Left cardiac atrium (tissue), 4 donors: ENCODE measurements at regions of chr6 and their contacts with region 1.

Region 1: DNA sequence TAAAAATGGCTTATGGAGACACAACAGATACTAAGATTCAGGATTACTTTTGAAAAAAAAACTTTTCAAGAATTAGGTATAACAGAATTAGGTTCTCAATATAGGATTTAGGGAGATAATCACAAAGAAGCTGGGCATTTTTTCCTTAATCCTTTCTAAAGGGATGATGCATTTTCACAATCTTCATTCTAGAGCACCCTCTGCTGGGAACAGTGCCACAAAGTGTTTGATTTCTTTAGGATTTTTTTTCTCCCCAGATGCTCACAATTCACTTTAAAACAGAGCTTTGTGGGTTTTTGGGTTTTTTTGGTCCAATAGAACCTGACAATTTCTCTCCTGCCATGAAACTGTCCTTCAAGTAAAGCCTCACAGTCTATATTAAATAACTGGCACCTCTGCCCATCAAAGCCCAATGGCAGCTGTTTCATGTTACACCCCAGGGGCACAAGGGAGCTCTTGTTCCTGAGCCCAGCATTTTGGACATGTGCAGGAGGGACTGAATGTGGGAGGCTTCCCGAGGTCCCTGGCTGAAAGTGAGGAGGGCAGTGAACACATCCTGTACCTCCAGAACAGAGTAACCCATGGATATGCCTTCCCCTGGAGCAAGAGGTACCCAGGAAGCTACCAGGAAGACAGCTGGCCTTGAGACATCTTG is 39.7 kb downstream of the PREP start:
- DNase-seq: no peak
- ATAC-seq: no peak

Region 2: DNA sequence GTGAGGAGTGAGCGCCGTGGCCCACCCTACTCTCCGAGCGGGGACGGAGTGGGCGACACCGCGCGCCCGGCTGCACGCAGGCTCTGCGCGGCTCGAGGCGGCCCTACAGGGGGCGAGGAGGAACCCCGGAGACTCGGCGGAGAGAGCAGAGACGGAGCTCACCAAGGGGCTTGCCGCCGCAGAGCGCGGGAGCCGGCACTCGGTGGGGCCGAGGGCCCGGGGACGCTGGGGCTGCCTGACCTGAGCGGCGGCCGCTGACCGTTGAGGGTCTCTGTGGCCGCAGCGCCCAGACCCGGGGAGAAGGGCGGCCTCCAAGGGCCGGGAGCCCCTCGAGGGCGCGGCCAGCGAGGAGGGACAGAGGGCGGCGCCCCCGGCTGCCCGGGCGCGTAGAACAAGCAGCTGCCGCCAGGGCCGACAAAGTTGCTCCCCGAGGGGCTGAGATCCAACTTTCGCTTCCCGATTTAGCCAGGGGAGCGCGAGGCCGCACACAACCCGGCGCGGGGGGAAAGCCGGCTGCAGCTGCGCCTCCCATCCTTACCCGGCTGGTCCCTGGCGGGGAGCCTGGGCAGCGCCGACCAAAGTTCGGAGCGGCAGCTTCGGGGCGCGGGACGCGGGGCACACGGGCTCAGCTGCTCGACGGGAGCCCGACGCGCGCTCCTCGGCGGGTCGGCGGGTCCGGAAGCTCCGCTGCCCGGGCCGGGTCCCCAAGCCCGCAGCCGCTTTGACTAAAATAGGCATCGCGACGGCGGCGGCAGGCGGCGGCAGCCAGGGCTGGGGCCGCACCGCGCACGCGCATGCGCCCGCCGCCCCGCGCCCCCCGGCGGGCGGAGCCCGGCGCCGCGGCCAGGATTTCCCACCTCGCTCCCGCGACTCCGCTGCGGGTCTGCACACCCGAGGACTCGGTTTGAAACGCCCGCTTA is 226.5 kb before region 1 on chr6:
- intact Hi-C with region 1: loop called in 1 of 2 experiments (anchors 5 kb)
- DNase-seq: peak; percentile 70
- ATAC-seq: peak; percentile 88 to 89

Region 3: GRCh38 chr6:105209950-105210706 is 153.1 kb before region 1 on chr6:
- intact Hi-C with region 1: no loop called
- DNase-seq: no peak
- ATAC-seq: no peak

Region 4: GRCh38 chr6:105305521-105305920 is 57.7 kb before region 1 on chr6:
- intact Hi-C with region 1: no loop called
- DNase-seq: no peak
- ATAC-seq: no peak

Region 5: DNA sequence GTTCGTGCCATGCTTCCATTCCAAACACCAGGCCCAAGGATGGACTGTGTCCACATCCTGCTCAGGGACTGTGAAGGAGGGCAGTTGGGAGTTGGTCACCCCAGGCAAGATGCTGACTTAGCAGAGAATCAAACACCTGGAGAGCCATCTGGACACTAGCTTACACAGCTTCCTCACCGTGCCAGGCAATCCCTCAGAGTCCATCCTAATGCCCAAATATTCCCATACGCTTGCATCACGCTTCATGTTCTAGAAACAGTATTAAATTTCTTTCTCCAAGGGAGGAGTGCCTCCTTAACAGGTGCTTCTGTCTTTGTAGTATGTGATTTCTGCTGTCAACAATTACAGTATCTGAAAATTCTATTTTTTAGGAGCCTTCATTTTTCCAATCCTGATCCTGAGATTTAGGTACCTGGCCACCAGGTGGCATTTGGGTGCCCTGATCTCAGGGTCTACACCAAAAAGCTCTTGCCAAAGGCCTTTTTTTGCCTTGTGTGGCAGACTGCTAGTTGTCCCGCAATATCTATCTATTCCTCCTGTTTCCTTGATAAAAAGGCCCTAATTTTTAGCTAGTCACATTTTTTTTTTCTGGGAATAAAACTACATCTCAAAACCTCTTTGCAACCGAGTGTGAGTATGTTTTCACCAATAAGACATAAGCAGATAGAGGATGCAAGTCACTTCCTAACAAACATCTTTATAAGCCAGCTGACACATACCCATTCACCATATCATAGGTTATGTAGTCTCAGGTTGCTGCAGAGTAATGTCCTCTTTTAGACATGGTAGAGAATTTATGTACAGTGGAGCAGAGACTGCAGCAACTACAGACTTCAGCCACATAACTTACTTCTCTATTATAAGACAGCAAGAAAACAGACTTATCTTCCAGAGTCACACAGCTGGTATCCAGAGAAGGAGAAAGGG is 45.4 kb before region 1 on chr6:
- intact Hi-C with region 1: no loop called
- DNase-seq: no peak
- ATAC-seq: no peak

Region 6: GRCh38 chr6:105545947-105546731 is 182.9 kb after region 1 on chr6:
- intact Hi-C with region 1: no loop called
- DNase-seq: no peak
- ATAC-seq: no peak